ENCODE measurements at regions of chr11 and their contacts with region 1.

Region 1: GRCh38 chr11:111446404-111447111 is 65.6 kb downstream of the BTG4 start:
- DNase-seq: peak; percentile 76
- ATAC-seq: peak; percentile 98
- H3K4me3 ChIP-seq: no peak overlapping the region
- H3K27ac ChIP-seq: no peak overlapping the region
- H3K4me1 ChIP-seq: peaks cover 9% of the 10 kb centered on the region
- H3K27me3 ChIP-seq: no peaks in the 10 kb centered on the region
- CTCF ChIP-seq: peak; percentile 91 to 96 (median 94)
- EP300 ChIP-seq: no peak
- POLR2A ChIP-seq: no peak
- RAD21 ChIP-seq: peak; percentile 100

Region 2: GRCh38 chr11:110434952-110435779 is 1011.4 kb before region 1 on chr11:
- CTCF ChIA-PET with region 1: interaction called, 16 read pairs
- POLR2A ChIA-PET with region 1: no interaction called
- RAD21 ChIA-PET with region 1: interaction called, 7 read pairs
- SMC1A ChIA-PET with region 1: interaction called, 5 read pairs
- in situ Hi-C with region 1: no loop called
- intact Hi-C with region 1: no loop called
- DNase-seq: no peak
- ATAC-seq: peak; percentile 43
- H3K4me3 ChIP-seq: no peak overlapping the region
- H3K27ac ChIP-seq: no peak overlapping the region
- H3K4me1 ChIP-seq: peaks cover 15% of the 10 kb centered on the region
- H3K27me3 ChIP-seq: no peaks in the 10 kb centered on the region
- CTCF ChIP-seq: peak; percentile 38 to 44 (median 43); a peak in 5 of 6 replicates
- EP300 ChIP-seq: no peak
- POLR2A ChIP-seq: no peak
- RAD21 ChIP-seq: no peak

Region 3: GRCh38 chr11:110447897-110448745 is 998.4 kb before region 1 on chr11:
- CTCF ChIA-PET with region 1: interaction called, 7 read pairs
- POLR2A ChIA-PET with region 1: no interaction called
- RAD21 ChIA-PET with region 1: interaction called, 4 read pairs
- SMC1A ChIA-PET with region 1: interaction called, 3 read pairs
- in situ Hi-C with region 1: loop called (anchors 10 kb)
- intact Hi-C with region 1: loop called (anchors 5 kb)
- DNase-seq: no peak
- ATAC-seq: peak; percentile 65
- H3K4me3 ChIP-seq: no peak overlapping the region
- H3K27ac ChIP-seq: no peak overlapping the region
- H3K4me1 ChIP-seq: peaks cover 3% of the 10 kb centered on the region; the same call in 1 of the 2 replicates
- H3K27me3 ChIP-seq: no peaks in the 10 kb centered on the region
- CTCF ChIP-seq: peak; percentile 38 to 52 (median 49); a peak in 4 of 6 replicates
- EP300 ChIP-seq: no peak
- POLR2A ChIP-seq: no peak
- RAD21 ChIP-seq: peak; percentile 68

Region 4: GRCh38 chr11:110453684-110454354 is 992.7 kb before region 1 on chr11:
- CTCF ChIA-PET with region 1: interaction called, 3 read pairs
- POLR2A ChIA-PET with region 1: no interaction called
- RAD21 ChIA-PET with region 1: no interaction called
- SMC1A ChIA-PET with region 1: interaction called, 3 read pairs
- in situ Hi-C with region 1: loop called (anchors 10 kb)
- intact Hi-C with region 1: loop called (anchors 5 kb)
- DNase-seq: no peak
- ATAC-seq: peak; percentile 97
- H3K4me3 ChIP-seq: no peak overlapping the region
- H3K27ac ChIP-seq: no peak overlapping the region
- H3K4me1 ChIP-seq: peaks cover 19% of the 10 kb centered on the region
- H3K27me3 ChIP-seq: no peaks in the 10 kb centered on the region
- CTCF ChIP-seq: no peak
- EP300 ChIP-seq: peak in 1 of 2 experiments; percentile 56; a peak in 2 of 4 replicates
- POLR2A ChIP-seq: no peak
- RAD21 ChIP-seq: no peak

Region 5: DNA sequence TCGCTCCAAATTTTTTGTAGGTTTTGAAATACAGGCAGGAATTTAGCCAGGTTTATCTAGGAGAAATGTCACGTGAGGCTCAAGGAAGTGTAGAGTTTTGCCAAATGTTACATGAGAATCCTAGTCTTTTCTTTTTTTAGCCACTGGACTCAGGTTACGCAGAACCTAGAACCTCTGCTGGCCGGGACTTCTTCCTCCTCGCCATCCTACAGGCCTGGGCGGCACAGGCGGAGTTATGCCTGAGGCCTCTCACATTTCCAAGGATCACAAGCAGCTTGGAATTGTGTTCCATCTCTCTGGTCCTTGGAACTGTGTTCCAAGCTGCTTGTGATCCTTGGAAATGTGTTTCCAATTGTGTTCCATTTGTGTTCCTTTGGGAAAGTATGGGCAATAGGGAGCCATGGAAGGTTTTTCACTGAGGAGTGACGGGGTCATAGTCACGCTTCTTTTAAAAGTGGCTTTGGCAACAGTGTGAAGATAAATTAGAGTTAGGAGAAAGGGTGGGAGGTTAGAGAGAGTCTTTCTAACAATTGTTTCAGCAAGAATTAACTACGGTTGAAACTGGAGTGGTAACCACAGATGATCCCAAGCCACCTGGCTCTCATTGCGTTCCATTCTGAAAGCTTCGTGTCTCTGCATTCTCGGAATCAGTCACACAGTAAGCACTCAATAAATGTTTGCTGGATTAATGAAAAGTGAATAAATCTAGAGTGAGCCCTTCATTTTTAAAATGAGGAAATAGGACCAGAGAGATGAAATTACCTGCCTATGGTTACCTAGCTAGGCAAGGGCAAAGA is 55.0 kb before region 1 on chr11:
- CTCF ChIA-PET with region 1: no interaction called
- POLR2A ChIA-PET with region 1: no interaction called
- RAD21 ChIA-PET with region 1: no interaction called
- SMC1A ChIA-PET with region 1: no interaction called
- in situ Hi-C with region 1: no loop called
- intact Hi-C with region 1: no loop called
- DNase-seq: no peak
- ATAC-seq: no peak
- H3K4me3 ChIP-seq: no peak overlapping the region
- H3K27ac ChIP-seq: no peak overlapping the region
- H3K4me1 ChIP-seq: peaks cover 27% of the 10 kb centered on the region
- H3K27me3 ChIP-seq: no peaks in the 10 kb centered on the region
- CTCF ChIP-seq: no peak
- EP300 ChIP-seq: no peak
- POLR2A ChIP-seq: no peak
- RAD21 ChIP-seq: no peak

Region 6: DNA sequence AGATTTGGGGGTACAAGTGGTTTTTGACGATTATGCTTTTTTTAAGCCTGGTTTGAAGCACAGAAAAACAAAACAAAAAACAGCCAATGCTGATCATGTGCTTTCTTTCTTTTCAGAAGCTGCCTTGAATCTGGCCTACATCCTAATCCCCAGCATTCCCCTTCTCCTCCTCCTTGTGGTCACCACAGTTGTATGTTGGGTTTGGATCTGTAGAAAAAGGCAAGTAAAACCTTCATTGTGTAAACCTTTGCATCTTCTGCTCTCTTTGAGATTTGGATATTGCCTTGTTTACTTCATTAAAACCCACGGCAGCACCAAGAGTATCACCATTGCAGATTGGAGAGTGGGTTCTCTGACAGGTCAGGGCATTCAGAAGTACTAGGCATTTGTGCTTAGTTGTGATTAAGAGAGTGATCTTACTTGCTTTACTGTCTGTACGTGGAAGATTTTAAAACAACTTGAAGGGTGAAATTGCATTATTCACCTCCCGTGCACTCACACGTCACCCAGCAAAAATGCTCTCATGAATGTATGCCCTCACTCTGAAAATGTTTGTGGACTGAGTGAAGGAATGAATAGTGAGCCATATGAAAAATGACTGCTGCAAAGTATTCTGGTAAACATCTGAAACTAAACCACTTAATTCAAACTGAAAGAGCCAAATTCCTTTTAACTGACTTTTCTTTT is 111.0 kb after region 1 on chr11:
- CTCF ChIA-PET with region 1: no interaction called
- POLR2A ChIA-PET with region 1: no interaction called
- RAD21 ChIA-PET with region 1: no interaction called
- SMC1A ChIA-PET with region 1: no interaction called
- in situ Hi-C with region 1: no loop called
- intact Hi-C with region 1: no loop called
- DNase-seq: no peak
- ATAC-seq: no peak
- H3K4me3 ChIP-seq: no peak overlapping the region
- H3K27ac ChIP-seq: no peak overlapping the region
- H3K4me1 ChIP-seq: no peaks in the 10 kb centered on the region
- H3K27me3 ChIP-seq: peaks cover 0 to 2% of the 10 kb centered on the region in 2 experiments; a peak in 1 of 4 replicates
- CTCF ChIP-seq: no peak
- EP300 ChIP-seq: no peak
- POLR2A ChIP-seq: no peak
- RAD21 ChIP-seq: no peak